Naive thymus-derived CD4-positive, alpha-beta T cell (primary cell): ENCODE measurements at regions of chr16 and their contacts with region 1.

Region 1: GRCh38 chr16:28974437-28975157 is at the start of gene SPNS1:
- DNase-seq: peak; percentile 77 to 96 (median 87)
- ATAC-seq: peak; percentile 95
- H3K4me3 ChIP-seq: peak within 1 kb of the TSS; percentile 80
- H3K4me3 Mint-ChIP-seq: peak within 1 kb of the TSS; percentile 96 to 99 (median 98)
- H3K27ac ChIP-seq: peak within 1 kb of the TSS; percentile 75
- H3K27ac Mint-ChIP-seq: peak within 1 kb of the TSS; percentile 91 to 99 (median 96)
- H3K4me1 ChIP-seq: peaks cover 5 to 12% of the 10 kb centered on the region in 2 donors
- H3K4me1 Mint-ChIP-seq: peaks cover 30 to 48% (median 41%) of the 10 kb centered on the region in 7 donors
- H3K27me3 ChIP-seq: no peaks in the 10 kb centered on the region
- H3K27me3 Mint-ChIP-seq: no peaks in the 10 kb centered on the region
- total RNA-seq, gene SPNS1: 31.1 to 47.0 (median 42.1) TPM

Region 2: DNA sequence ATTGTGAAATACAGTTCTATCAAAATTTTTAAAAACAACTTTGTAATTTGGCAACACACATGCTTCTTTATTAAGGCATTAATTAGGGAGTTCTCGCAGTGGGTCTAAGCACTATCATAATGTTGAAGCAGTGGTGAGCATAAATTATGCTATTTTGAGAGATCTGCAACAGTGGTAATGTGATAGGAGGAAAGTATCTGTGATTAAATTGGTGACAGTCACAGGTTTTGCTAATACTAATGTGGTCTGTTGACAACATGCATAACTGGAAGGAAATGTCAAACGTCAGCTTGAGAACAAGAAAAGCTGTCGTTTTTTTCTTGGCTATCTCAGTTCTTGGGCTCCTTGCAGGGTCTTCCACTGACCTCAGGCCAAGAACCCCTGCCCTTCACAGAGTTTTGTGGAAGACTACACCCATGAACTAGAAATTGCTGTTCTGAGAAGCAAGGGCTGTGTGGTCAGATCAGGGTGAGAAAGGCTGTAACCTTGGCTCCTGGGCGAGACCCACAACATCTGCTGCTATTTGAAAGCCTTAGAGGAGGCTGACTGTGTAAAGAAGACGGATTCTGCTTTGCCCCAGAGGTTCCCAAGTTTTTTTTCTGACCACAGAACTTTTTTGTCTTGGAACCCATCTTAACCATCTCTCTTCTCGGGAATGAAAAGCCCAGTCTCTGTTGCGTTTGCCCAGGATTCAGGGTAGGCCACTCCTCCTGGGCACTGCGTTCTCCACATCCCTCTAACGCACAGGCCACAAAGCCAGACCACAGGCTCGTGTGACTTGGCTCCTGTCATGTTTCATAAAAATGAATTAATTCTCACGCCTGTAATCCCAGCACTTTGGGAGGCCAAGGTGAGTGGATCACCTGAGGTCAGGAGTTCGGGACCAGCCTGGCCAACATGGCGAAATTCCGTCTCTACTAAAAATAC is 82.4 kb before region 1 on chr16:
- CTCF ChIA-PET with region 1: no interaction called
- POLR2A ChIA-PET with region 1: no interaction called
- intact Hi-C with region 1: no loop called
- DNase-seq: no peak
- ATAC-seq: no peak
- H3K4me3 ChIP-seq: no peak overlapping the region
- H3K4me3 Mint-ChIP-seq: peak overlapping the region in 1 of 10 donors; percentile 29
- H3K27ac ChIP-seq: no peak overlapping the region
- H3K27ac Mint-ChIP-seq: peak overlapping the region in 1 of 9 donors; percentile 17
- H3K4me1 ChIP-seq: no peaks in the 10 kb centered on the region
- H3K4me1 Mint-ChIP-seq: peaks cover 0 to 3% (median 0%) of the 10 kb centered on the region in 7 donors
- H3K27me3 ChIP-seq: no peaks in the 10 kb centered on the region
- H3K27me3 Mint-ChIP-seq: no peaks in the 10 kb centered on the region

Region 3: DNA sequence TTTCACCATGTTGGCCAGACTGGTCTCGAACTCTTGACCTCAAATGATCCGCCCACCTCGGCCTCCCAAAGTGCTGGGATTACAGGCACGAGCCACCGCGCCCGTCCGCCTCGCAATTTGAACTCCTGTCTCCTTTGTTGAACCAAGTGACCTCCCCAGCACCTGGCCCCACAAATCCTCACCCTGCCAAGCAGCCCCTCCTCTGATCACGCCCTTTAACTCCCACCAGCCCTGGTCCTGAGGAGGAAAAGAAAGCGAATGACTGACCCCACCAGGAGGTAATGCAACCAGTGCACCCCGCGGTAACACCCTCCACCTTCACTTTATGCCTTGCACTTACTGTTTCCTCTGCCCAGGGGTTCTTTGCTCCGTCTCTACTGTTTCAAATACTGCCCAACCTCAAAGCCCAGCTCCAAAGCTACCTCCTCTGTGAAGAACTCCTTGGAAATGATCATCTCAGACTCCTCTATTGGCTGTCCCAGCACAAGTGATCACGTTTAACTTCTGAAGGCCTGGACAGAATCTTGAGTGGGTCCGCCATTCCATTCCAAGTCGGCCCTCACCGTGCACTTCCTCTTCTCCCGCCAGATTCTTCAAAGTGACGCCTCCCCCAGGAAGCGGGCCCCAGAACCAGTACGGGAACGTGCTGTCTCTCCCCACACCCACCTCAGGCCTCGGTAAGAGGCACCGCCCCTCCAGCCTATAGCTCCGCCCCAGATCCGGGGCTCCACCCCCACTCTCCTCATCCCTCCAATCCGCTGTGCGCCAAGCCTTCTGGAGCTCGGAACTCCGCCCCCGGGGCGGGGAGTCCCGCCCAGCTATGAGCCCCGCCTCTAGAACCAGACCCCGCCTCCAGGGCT is 38.4 kb before region 1 on chr16:
- CTCF ChIA-PET with region 1: no interaction called
- POLR2A ChIA-PET with region 1: interaction called, 3 read pairs
- intact Hi-C with region 1: loop called in 1 of 2 experiments (anchors 1 kb)
- DNase-seq: peak; percentile 75 to 92 (median 86)
- ATAC-seq: peak; percentile 100
- H3K4me3 ChIP-seq: peak overlapping the region; percentile 14
- H3K4me3 Mint-ChIP-seq: peak overlapping the region; percentile 54 to 82 (median 78)
- H3K27ac ChIP-seq: peak overlapping the region; percentile 51
- H3K27ac Mint-ChIP-seq: peak overlapping the region; percentile 17 to 87 (median 74)
- H3K4me1 ChIP-seq: peaks cover 0 to 9% of the 10 kb centered on the region in 2 donors
- H3K4me1 Mint-ChIP-seq: peaks cover 13 to 23% (median 19%) of the 10 kb centered on the region in 7 donors
- H3K27me3 ChIP-seq: no peaks in the 10 kb centered on the region
- H3K27me3 Mint-ChIP-seq: peaks cover 0 to 4% (median 0%) of the 10 kb centered on the region in 5 donors

Region 4: DNA sequence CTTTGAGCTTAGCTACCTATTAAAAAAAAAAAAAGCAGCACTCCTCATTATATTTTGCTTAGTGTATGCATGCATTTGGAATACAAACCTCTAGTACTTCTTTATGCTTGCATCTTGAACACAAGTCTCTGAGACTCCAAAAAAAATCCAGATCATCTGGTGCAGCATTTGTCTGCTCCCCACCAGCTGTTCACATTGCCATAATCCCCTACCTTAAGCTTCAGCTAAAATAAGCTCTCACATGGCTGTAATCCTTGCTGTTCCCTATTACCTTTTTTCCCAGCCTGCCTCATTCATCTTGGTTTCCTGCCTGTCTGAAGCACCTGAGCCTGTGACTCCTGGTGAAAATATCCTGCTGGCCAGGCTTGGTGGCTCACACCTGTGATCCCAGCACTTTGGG is 31.3 kb before region 1 on chr16:
- CTCF ChIA-PET with region 1: interaction called, 8 read pairs
- POLR2A ChIA-PET with region 1: interaction called, 4 read pairs
- intact Hi-C with region 1: loop called in 1 of 2 experiments (anchors 1 kb)
- DNase-seq: no peak
- ATAC-seq: no peak
- H3K4me3 ChIP-seq: no peak overlapping the region
- H3K4me3 Mint-ChIP-seq: no peak overlapping the region
- H3K27ac ChIP-seq: no peak overlapping the region
- H3K27ac Mint-ChIP-seq: no peak overlapping the region
- H3K4me1 ChIP-seq: peaks cover 0 to 8% of the 10 kb centered on the region in 2 donors
- H3K4me1 Mint-ChIP-seq: peaks cover 7 to 19% (median 8%) of the 10 kb centered on the region in 7 donors
- H3K27me3 ChIP-seq: no peaks in the 10 kb centered on the region
- H3K27me3 Mint-ChIP-seq: peaks cover 0 to 10% (median 0%) of the 10 kb centered on the region in 5 donors

Region 5: GRCh38 chr16:28950648-28951409 is 23.8 kb before region 1 on chr16 and contains the start of gene NFATC2IP:
- CTCF ChIA-PET with region 1: interaction called, 8 read pairs
- POLR2A ChIA-PET with region 1: interaction called, 28 read pairs
- intact Hi-C with region 1: no loop called
- DNase-seq: peak; percentile 98 to 100 (median 99)
- ATAC-seq: peak; percentile 98
- H3K4me3 ChIP-seq: peak within 1 kb of the TSS; percentile 73
- H3K4me3 Mint-ChIP-seq: peak within 1 kb of the TSS; percentile 75 to 100 (median 92)
- H3K27ac ChIP-seq: peak within 1 kb of the TSS; percentile 81
- H3K27ac Mint-ChIP-seq: peak within 1 kb of the TSS; percentile 67 to 94 (median 86)
- H3K4me1 ChIP-seq: peaks cover 10 to 14% of the 10 kb centered on the region in 2 donors
- H3K4me1 Mint-ChIP-seq: peaks cover 10 to 41% (median 37%) of the 10 kb centered on the region in 7 donors
- H3K27me3 ChIP-seq: no peaks in the 10 kb centered on the region
- H3K27me3 Mint-ChIP-seq: peaks cover 0 to 6% (median 0%) of the 10 kb centered on the region in 5 donors
- total RNA-seq, gene NFATC2IP: 70.9 to 117 (median 111) TPM

Region 6: DNA sequence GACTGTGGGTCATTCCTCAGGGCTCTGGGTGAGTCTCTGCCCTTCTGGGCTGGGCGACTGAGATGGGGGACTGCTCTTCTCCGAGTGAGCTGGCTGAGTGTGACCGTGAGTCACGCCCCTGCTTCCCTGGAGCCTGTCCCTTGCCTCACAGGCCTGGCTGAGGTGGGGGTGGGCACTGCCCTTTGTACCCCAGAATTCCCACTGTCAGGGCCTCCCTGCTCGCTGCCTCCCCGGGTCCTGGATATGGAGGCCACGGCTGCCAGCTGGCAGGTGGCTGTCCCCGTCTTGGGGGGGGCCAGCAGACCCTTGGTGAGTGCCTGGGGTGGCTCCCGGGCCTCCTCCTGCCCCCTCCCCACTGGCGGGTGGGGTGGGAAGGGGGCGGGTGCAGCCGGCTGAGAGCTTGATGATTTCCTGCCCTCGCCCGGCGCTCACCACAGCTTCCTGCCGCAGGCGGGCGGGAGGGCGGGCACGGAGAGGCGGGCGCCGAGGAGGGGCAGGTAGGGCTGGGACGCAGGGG is 10.1 kb after region 1 on chr16 and contains the start of gene LAT:
- CTCF ChIA-PET with region 1: interaction called, 14 read pairs
- POLR2A ChIA-PET with region 1: interaction called, 143 read pairs
- intact Hi-C with region 1: loop called in 1 of 2 experiments (anchors 1 kb)
- DNase-seq: peak; percentile 67 to 87 (median 84)
- ATAC-seq: peak; percentile 86
- H3K4me3 ChIP-seq: peak within 1 kb of the TSS; percentile 98
- H3K4me3 Mint-ChIP-seq: peak within 1 kb of the TSS; percentile 94 to 100 (median 98)
- H3K27ac ChIP-seq: peak within 1 kb of the TSS; percentile 87
- H3K27ac Mint-ChIP-seq: peak within 1 kb of the TSS; percentile 94 to 99 (median 97)
- H3K4me1 ChIP-seq: peaks cover 41% of the 10 kb centered on the region in 2 donors
- H3K4me1 Mint-ChIP-seq: peaks cover 41 to 54% (median 49%) of the 10 kb centered on the region in 7 donors
- H3K27me3 ChIP-seq: no peaks in the 10 kb centered on the region
- H3K27me3 Mint-ChIP-seq: no peaks in the 10 kb centered on the region
- total RNA-seq, gene LAT: 179 to 476 (median 342) TPM

Region 7: DNA sequence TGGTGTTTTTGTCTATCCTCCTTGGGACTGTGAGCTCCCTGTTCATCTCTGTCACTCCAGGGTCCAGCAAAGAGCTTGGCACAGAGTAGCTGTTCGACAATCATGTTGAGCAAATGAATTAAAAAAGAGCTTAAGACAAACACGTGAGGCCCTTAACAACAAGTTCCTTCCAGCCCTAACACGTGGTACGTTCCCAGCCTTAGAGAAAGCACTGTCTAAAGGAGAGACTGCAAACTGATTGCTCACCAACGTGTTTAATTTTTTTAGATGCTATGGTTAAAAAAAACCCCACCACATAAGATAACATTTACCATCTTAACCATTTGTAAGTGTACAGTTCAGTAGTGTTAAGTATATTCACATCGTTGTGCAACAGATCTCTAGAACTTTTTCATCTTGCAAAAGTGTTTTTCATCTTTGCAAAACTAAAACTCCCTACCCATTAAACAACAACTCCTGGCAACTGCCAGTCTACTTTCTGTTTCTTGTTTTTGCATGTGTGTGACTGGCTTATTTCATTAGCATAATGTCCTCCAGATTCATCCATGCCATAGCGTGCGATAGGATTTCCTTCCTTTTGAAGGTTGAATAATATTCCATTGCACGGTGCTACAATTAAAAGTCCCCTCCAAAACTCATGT is 38.4 kb after region 1 on chr16:
- CTCF ChIA-PET with region 1: interaction called, 6 read pairs
- POLR2A ChIA-PET with region 1: interaction called, 7 read pairs
- intact Hi-C with region 1: loop called in 1 of 2 experiments (anchors 1 kb)
- DNase-seq: peak in 7 of 9 donors; percentile 65 to 88 (median 77)
- ATAC-seq: peak; percentile 87
- H3K4me3 ChIP-seq: no peak overlapping the region
- H3K4me3 Mint-ChIP-seq: peak overlapping the region; percentile 51 to 81 (median 62)
- H3K27ac ChIP-seq: peak overlapping the region; percentile 71
- H3K27ac Mint-ChIP-seq: peak overlapping the region; percentile 89 to 99 (median 97)
- H3K4me1 ChIP-seq: peaks cover 30 to 58% of the 10 kb centered on the region in 2 donors
- H3K4me1 Mint-ChIP-seq: peaks cover 38 to 82% (median 48%) of the 10 kb centered on the region in 7 donors
- H3K27me3 ChIP-seq: no peaks in the 10 kb centered on the region
- H3K27me3 Mint-ChIP-seq: no peaks in the 10 kb centered on the region

Region 8: GRCh38 chr16:29023279-29024277 is 49.0 kb after region 1 on chr16:
- CTCF ChIA-PET with region 1: interaction called, 11 read pairs
- POLR2A ChIA-PET with region 1: interaction called, 10 read pairs
- intact Hi-C with region 1: loop called in 1 of 2 experiments (anchors 2 kb)
- DNase-seq: peak in 3 of 9 donors; percentile 20 to 31 (median 25)
- ATAC-seq: peak; percentile 36
- H3K4me3 ChIP-seq: no peak overlapping the region
- H3K4me3 Mint-ChIP-seq: peak overlapping the region in 9 of 10 donors; percentile 21 to 80 (median 69)
- H3K27ac ChIP-seq: peak overlapping the region; percentile 68
- H3K27ac Mint-ChIP-seq: peak overlapping the region; percentile 63 to 96 (median 93)
- H3K4me1 ChIP-seq: peaks cover 17 to 46% of the 10 kb centered on the region in 2 donors
- H3K4me1 Mint-ChIP-seq: peaks cover 36 to 74% (median 55%) of the 10 kb centered on the region in 7 donors
- H3K27me3 ChIP-seq: no peaks in the 10 kb centered on the region
- H3K27me3 Mint-ChIP-seq: no peaks in the 10 kb centered on the region